A673 (cell line): ENCODE measurements at regions of chr10 and their contacts with region 1.

Region 1: GRCh38 chr10:4849555-4850242 is 23.7 kb downstream of the AKR1E2 start:
- DNase-seq: peak; percentile 97
- H3K4me3 ChIP-seq: no peak overlapping the region
- H3K27ac ChIP-seq: peak overlapping the region; percentile 59
- H3K4me1 ChIP-seq: peaks cover 26% of the 10 kb centered on the region
- H3K27me3 ChIP-seq: no peaks in the 10 kb centered on the region
- CTCF ChIP-seq: peak; percentile 100

Region 2: GRCh38 chr10:5043716-5044115 is 194.0 kb after region 1 on chr10:
- CTCF ChIA-PET with region 1: interaction called, 6 read pairs
- POLR2A ChIA-PET with region 1: no interaction called
- intact Hi-C with region 1: loop called (anchors 5 kb)
- DNase-seq: peak; percentile 48
- H3K4me3 ChIP-seq: no peak overlapping the region
- H3K27ac ChIP-seq: peak overlapping the region; percentile 98
- H3K4me1 ChIP-seq: peaks cover 54% of the 10 kb centered on the region
- H3K27me3 ChIP-seq: no peaks in the 10 kb centered on the region
- CTCF ChIP-seq: no peak

Region 3: DNA sequence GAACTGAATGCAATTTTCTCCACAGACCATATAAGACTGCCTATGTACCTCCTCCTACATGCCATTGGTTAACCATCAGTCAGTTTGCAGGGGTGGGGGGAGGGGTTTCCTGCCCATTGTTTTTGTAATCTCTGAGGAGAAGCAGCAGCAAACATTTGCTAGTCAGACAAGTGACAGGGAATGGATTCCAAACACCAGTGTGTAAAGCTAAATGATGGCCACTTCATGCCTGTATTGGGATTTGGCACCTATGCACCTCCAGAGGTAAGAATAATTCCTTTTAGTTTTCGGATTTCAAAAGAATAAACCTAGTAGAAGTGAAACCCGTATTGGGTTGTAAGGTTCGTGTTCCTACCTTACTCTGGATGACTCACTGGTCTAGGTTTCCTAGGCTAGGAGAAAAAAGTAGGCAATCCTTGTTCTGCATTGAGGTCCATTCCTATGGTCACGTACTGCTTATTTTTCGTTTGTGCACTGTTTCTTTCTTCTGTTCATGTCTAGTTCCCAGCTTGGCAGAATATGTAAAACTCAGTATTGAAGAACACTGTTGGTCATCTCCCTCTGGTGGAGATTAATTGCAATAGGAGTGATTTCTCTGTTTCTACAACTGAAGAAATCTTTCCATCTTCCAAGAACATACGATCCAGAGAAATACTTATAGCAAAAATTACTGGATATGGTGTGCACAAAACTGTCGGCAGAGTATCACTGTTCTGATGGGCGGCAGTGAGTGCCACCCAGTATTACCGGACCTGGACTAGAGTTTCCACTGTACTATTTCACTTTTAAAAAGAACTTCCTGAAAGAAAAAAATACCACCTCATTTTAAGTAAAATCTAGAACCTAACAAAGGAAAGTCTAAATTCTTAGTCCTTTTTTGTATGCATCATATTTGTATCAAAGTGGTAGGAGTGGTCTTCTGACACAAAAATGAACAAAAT is 244.8 kb after region 1 on chr10 and contains the start of gene AKR1C3:
- CTCF ChIA-PET with region 1: interaction called, 24 read pairs
- POLR2A ChIA-PET with region 1: no interaction called
- intact Hi-C with region 1: loop called (anchors 1 kb)
- DNase-seq: peak; percentile 89
- H3K4me3 ChIP-seq: peak within 1 kb of the TSS; percentile 63
- H3K27ac ChIP-seq: peak within 1 kb of the TSS; percentile 83
- H3K4me1 ChIP-seq: peaks cover 4% of the 10 kb centered on the region
- H3K27me3 ChIP-seq: no peaks in the 10 kb centered on the region
- CTCF ChIP-seq: peak; percentile 80
- total RNA-seq, gene AKR1C3: 618 and 627 TPM in 2 replicates

Region 4: GRCh38 chr10:5283305-5284158 is 433.8 kb after region 1 on chr10:
- CTCF ChIA-PET with region 1: interaction called, 17 read pairs
- POLR2A ChIA-PET with region 1: no interaction called
- intact Hi-C with region 1: loop called (anchors 1 kb)
- DNase-seq: peak; percentile 89
- H3K4me3 ChIP-seq: no peak overlapping the region
- H3K27ac ChIP-seq: peak overlapping the region; percentile 73
- H3K4me1 ChIP-seq: peaks cover 23% of the 10 kb centered on the region
- H3K27me3 ChIP-seq: no peaks in the 10 kb centered on the region
- CTCF ChIP-seq: peak; percentile 83

Region 5: GRCh38 chr10:5385224-5385623 is 535.5 kb after region 1 on chr10:
- CTCF ChIA-PET with region 1: interaction called, 12 read pairs
- POLR2A ChIA-PET with region 1: no interaction called
- intact Hi-C with region 1: loop called (anchors 1 kb)
- DNase-seq: no peak
- H3K4me3 ChIP-seq: no peak overlapping the region
- H3K27ac ChIP-seq: no peak overlapping the region
- H3K4me1 ChIP-seq: no peaks in the 10 kb centered on the region
- H3K27me3 ChIP-seq: no peaks in the 10 kb centered on the region
- CTCF ChIP-seq: no peak

Region 6: DNA sequence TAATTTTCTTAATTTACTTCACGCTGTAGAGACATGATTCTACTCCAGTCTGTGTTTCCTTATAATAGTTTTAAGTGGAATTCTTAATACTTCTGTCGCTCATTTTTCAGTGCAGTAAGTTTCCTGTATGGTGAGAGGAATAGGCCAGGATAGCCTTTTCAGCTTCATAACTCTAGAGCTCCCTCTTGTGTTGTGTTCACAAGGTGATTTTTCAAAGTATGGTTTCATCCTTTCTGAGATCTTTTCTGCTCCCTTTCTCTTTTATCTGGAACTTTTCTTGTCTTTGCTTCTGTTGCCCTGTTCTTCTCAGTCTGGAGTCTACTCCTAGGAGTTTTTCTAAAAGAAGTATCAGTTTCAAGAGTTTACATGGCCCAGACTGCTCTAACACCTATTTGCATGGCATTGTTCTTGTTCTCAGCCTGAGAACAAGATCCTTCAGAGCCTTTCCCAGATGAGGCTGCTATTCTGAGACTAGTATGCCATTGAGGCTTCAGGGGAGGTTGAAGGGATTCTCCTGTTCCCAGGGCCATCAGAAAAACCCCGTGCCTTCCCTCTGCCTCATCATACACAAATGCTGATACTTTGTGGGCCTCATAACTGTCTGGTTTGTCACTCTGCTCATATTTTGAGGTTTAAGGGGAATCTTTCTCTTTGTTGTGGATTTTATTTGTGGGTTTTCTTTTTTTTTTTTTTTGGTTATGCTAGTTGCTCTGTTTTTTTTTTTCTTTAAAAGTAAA is 584.5 kb after region 1 on chr10:
- CTCF ChIA-PET with region 1: interaction called, 25 read pairs
- POLR2A ChIA-PET with region 1: no interaction called
- intact Hi-C with region 1: loop called (anchors 5 kb)
- DNase-seq: peak; percentile 63
- H3K4me3 ChIP-seq: no peak overlapping the region
- H3K27ac ChIP-seq: peak overlapping the region; percentile 33
- H3K4me1 ChIP-seq: peaks cover 4% of the 10 kb centered on the region
- H3K27me3 ChIP-seq: no peaks in the 10 kb centered on the region
- CTCF ChIP-seq: peak; percentile 75

Region 7: DNA sequence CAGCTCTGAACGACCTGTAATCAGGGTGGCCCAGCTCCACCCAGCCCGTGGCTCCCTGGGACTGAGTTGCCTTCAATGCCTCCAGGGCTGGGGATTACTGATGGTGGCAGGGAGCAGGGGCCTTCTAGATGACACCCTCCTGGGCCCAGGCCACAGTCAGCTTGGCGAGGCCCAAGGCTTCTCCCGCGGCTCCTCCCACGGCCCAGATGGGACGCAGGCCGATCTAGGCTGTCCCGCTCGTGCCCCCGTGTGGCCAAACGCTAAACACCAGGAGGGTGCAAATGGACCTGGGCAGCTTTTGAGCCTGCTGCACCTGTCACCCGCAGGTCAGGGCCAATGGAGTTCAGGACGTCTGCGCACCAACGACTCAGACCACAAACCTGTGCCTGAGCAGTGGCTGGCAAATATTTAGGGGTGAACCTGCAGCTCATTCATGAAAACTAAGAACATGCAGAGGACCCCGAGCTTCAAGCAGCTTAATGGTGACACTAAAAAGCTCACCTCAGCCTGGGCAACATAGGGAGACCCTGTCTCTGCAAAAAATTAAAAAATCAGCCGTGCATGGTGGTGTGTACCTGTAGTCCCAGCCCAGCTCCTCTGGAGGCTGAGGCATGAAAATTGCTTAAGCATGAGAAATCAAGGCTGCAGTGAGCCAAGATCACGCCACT is 773.5 kb after region 1 on chr10:
- CTCF ChIA-PET with region 1: interaction called, 13 read pairs
- POLR2A ChIA-PET with region 1: no interaction called
- intact Hi-C with region 1: loop called (anchors 10 kb)
- DNase-seq: peak; percentile 90
- H3K4me3 ChIP-seq: no peak overlapping the region
- H3K27ac ChIP-seq: no peak overlapping the region
- H3K4me1 ChIP-seq: no peaks in the 10 kb centered on the region
- H3K27me3 ChIP-seq: no peaks in the 10 kb centered on the region
- CTCF ChIP-seq: peak; percentile 93